ENCODE measurements at regions of chr19 and their contacts with region 1.

Region 1: DNA sequence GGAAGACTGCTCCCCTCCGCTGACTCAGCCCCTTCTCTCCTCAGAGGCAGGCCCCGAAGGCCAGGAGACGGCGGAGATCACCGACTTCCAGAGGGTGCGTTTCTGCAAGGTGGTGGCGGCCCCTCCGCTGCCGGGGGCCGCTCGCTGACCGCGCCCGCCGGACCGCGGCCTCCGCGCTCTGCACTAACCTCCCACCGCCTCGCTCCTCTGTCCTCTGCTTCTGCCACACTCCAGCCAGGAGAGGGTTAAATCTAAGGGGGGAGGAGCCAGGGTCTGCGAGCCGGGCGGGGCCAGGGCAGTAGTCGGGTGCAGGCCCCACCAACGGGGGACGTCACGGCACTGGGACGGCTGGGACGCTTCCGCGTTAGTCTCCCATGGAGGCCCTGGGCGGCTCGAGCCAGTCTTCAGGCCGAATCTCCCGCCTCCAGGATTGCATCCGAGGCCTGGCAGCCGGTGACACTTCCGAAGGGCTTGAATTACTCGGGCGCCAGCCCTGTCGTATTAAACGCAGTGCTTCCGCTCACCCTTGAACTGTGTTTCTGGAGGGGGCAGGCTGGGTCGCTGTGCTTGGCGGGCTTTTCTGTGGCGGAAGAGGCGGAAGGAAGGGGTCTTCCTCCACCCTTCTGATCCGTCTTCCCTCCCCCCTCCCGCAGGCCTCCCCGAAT is 1.2 kb upstream of the INAFM1 start:
- DNase-seq: peak; percentile 77 to 93 (median 89)
- ATAC-seq: peak; percentile 56
- H3K4me3 ChIP-seq: peak overlapping the region; percentile 94 to 99
- H3K4me3 Mint-ChIP-seq: peak overlapping the region; percentile 98
- H3K27ac ChIP-seq: peak overlapping the region; percentile 96 to 97
- H3K27ac Mint-ChIP-seq: peak overlapping the region; percentile 97
- H3K4me1 ChIP-seq: peaks cover 18% of the 10 kb centered on the region
- H3K4me1 Mint-ChIP-seq: peaks cover 19% of the 10 kb centered on the region
- H3K27me3 ChIP-seq: no peaks in the 10 kb centered on the region
- H3K27me3 Mint-ChIP-seq: no peaks in the 10 kb centered on the region
- CTCF ChIP-seq: no peak

Region 2: GRCh38 chr19:45506246-45506990 is 1767.0 kb before region 1 on chr19:
- CTCF ChIA-PET with region 1: no interaction called
- POLR2A ChIA-PET with region 1: no interaction called
- intact Hi-C with region 1: loop called in 1 of 2 experiments (anchors 5 kb)
- DNase-seq: peak; percentile 93 to 99 (median 97)
- ATAC-seq: peak; percentile 79
- H3K4me3 ChIP-seq: peak overlapping the region; percentile 74 to 90
- H3K4me3 Mint-ChIP-seq: peak overlapping the region; percentile 88
- H3K27ac ChIP-seq: peak overlapping the region; percentile 85 to 91
- H3K27ac Mint-ChIP-seq: peak overlapping the region; percentile 93
- H3K4me1 ChIP-seq: peaks cover 33% of the 10 kb centered on the region
- H3K4me1 Mint-ChIP-seq: peaks cover 39% of the 10 kb centered on the region
- H3K27me3 ChIP-seq: no peaks in the 10 kb centered on the region
- H3K27me3 Mint-ChIP-seq: no peaks in the 10 kb centered on the region
- CTCF ChIP-seq: peak; percentile 32

Region 3: DNA sequence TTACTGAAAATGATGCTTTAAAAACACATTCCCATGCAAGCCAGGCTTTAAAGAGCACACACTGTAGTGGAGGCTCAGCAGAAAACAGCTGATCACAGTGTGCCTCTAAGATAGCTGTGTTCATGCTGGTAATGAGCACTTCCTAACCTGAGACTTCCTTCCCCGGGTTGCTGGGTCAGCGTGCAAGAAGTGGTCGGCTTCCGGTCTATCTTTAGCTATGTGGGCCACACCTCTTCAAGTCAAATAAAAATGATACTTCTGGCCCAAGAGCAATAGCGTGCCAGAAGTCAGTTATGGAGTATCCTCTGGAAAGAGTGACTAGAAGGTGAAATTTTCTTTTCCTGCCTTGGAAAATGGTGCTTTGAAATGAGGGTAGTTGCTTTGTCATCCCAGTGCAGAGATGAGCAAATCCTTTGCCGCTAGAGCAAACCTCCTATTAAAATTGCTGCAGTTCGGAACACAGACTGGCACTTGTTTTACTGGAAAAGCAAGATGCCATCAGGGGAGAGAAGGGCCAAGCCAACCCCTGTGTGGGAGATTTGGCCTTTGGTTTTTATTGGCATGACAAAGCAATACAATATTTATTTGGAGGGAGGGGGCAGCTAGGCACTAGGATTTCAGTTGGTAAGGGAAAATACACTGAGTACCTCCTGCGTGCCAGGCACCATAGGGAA is 348.4 kb before region 1 on chr19:
- CTCF ChIA-PET with region 1: no interaction called
- POLR2A ChIA-PET with region 1: no interaction called
- intact Hi-C with region 1: no loop called
- DNase-seq: peak in 6 of 9 experiments; percentile 11 to 58 (median 18)
- ATAC-seq: peak; percentile 49
- H3K4me3 ChIP-seq: no peak overlapping the region
- H3K4me3 Mint-ChIP-seq: peak overlapping the region; percentile 58
- H3K27ac ChIP-seq: peak overlapping the region in 1 of 2 experiments; percentile 34
- H3K27ac Mint-ChIP-seq: peak overlapping the region; percentile 70
- H3K4me1 ChIP-seq: peaks cover 17% of the 10 kb centered on the region
- H3K4me1 Mint-ChIP-seq: peaks cover 54% of the 10 kb centered on the region
- H3K27me3 ChIP-seq: no peaks in the 10 kb centered on the region
- H3K27me3 Mint-ChIP-seq: no peaks in the 10 kb centered on the region
- CTCF ChIP-seq: no peak

Region 4: DNA sequence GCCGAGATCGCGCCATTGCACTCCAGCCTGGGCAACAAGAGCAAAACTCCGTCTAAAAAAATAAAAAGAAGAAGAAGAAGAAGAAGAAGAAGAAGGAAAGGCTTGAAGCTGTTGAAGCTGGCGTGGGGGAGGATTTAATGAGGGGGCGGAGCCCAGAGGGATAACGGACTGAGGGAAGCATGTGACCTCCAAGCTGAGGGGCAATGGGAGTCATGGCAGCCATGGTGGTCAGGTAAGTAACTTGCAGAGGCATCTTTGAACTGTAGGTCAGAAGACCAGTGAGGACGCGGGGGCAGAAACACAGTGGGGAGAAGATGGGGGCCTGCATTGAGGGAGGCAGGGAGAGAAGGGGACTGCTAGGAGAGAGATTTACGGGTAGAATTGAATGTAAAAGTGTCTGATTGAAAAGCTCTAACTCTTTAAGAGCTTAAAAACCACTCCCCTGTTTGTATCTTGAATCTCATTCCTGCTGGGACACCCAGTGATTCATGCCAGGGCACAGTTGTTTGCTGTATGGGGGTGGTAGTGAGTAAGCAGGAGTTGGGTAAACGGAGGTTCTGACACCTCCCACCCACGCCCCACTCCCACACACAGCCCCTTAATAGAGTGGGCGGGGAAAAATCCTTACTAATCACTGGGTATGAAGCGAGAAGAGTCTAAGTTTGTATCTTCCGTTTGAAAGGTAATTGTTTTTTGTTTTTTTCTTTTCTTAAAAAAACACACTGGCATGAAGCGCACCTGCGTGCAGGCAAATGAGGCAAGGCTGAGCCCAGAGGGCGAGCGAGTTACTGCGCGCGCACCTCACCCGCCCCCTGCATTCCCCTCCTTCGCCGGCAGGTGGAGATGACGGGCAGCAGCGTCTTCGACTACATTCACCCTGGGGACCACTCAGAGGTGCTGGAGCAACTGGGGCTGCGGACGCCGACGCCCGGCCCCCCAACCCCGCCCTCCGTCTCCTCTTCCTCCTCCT is 238.0 kb before region 1 on chr19:
- CTCF ChIA-PET with region 1: no interaction called
- POLR2A ChIA-PET with region 1: no interaction called
- intact Hi-C with region 1: loop called in 1 of 2 experiments (anchors 5 kb)
- DNase-seq: peak; percentile 90 to 99 (median 96)
- ATAC-seq: peak; percentile 98
- H3K4me3 ChIP-seq: peak overlapping the region; percentile 52 to 58
- H3K4me3 Mint-ChIP-seq: peak overlapping the region; percentile 88
- H3K27ac ChIP-seq: peak overlapping the region in 1 of 2 experiments; percentile 30
- H3K27ac Mint-ChIP-seq: peak overlapping the region; percentile 85
- H3K4me1 ChIP-seq: peaks cover 16% of the 10 kb centered on the region
- H3K4me1 Mint-ChIP-seq: peaks cover 17% of the 10 kb centered on the region
- H3K27me3 ChIP-seq: peaks cover 4 to 6% of the 10 kb centered on the region in 2 experiments
- H3K27me3 Mint-ChIP-seq: peaks cover 8% of the 10 kb centered on the region
- CTCF ChIP-seq: peak; percentile 99

Region 5: GRCh38 chr19:47210689-47211316 is 62.6 kb before region 1 on chr19:
- CTCF ChIA-PET with region 1: interaction called, 11 read pairs
- POLR2A ChIA-PET with region 1: interaction called, 3 read pairs
- intact Hi-C with region 1: no loop called
- DNase-seq: peak; percentile 58 to 87 (median 83)
- ATAC-seq: peak; percentile 98
- H3K4me3 ChIP-seq: no peak overlapping the region
- H3K4me3 Mint-ChIP-seq: no peak overlapping the region
- H3K27ac ChIP-seq: peak overlapping the region in 1 of 2 experiments; percentile 39
- H3K27ac Mint-ChIP-seq: peak overlapping the region; percentile 80
- H3K4me1 ChIP-seq: peaks cover 8% of the 10 kb centered on the region
- H3K4me1 Mint-ChIP-seq: peaks cover 8% of the 10 kb centered on the region
- H3K27me3 ChIP-seq: no peaks in the 10 kb centered on the region
- H3K27me3 Mint-ChIP-seq: no peaks in the 10 kb centered on the region
- CTCF ChIP-seq: peak; percentile 89

Region 6: GRCh38 chr19:47236072-47236675 is 37.3 kb before region 1 on chr19:
- CTCF ChIA-PET with region 1: no interaction called
- POLR2A ChIA-PET with region 1: no interaction called
- intact Hi-C with region 1: no loop called
- DNase-seq: no peak
- ATAC-seq: no peak
- H3K4me3 ChIP-seq: no peak overlapping the region
- H3K4me3 Mint-ChIP-seq: no peak overlapping the region
- H3K27ac ChIP-seq: no peak overlapping the region
- H3K27ac Mint-ChIP-seq: no peak overlapping the region
- H3K4me1 ChIP-seq: peaks cover 30% of the 10 kb centered on the region
- H3K4me1 Mint-ChIP-seq: peaks cover 34% of the 10 kb centered on the region
- H3K27me3 ChIP-seq: no peaks in the 10 kb centered on the region
- H3K27me3 Mint-ChIP-seq: no peaks in the 10 kb centered on the region
- CTCF ChIP-seq: no peak

Region 7: DNA sequence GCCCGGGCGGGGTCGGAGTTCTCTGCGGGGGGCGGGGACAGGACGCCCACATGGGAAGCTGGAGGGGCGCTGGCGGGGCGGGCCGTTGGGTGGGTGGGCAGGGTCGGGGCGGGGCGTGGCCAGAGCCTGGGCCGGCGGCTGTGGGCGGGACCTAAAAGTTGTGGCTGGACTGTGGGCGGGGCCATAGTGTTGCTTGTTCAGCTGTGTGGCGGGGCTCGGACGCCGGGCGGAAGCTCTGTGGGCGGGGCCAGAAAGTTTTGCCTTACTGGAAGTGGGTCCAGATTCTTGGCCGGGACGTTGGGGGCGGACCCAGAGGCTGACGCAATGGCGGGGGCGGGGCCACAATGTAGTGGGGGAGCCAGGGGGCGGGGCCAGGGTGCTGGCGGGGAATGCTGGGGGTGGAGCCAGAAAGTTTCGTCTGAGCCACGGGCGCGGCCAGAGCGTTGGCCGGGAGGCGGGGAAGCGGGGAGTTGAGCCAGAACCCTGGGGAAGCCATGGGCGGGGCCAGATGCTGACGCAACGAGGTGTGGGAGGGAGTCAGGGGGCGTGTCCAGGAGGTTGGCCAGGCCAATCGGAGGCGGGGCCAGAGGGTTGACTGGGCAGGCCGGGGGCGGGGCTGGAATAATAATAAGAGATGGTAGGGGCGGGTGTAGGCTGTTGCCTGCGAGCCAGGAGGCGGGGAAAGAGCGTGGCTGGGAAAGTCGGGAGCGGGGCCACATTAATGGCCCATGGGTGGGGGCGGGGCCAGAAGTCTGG is 16.6 kb before region 1 on chr19:
- CTCF ChIA-PET with region 1: interaction called, 4 read pairs
- POLR2A ChIA-PET with region 1: interaction called, 43 read pairs
- intact Hi-C with region 1: loop called (anchors 1 kb)
- DNase-seq: peak; percentile 96 to 100 (median 98)
- ATAC-seq: peak; percentile 80
- H3K4me3 ChIP-seq: peak overlapping the region; percentile 65 to 70
- H3K4me3 Mint-ChIP-seq: peak overlapping the region; percentile 92
- H3K27ac ChIP-seq: peak overlapping the region; percentile 76 to 98
- H3K27ac Mint-ChIP-seq: peak overlapping the region; percentile 97
- H3K4me1 ChIP-seq: peaks cover 23% of the 10 kb centered on the region
- H3K4me1 Mint-ChIP-seq: peaks cover 35% of the 10 kb centered on the region
- H3K27me3 ChIP-seq: no peaks in the 10 kb centered on the region
- H3K27me3 Mint-ChIP-seq: no peaks in the 10 kb centered on the region
- CTCF ChIP-seq: no peak

Region 8: DNA sequence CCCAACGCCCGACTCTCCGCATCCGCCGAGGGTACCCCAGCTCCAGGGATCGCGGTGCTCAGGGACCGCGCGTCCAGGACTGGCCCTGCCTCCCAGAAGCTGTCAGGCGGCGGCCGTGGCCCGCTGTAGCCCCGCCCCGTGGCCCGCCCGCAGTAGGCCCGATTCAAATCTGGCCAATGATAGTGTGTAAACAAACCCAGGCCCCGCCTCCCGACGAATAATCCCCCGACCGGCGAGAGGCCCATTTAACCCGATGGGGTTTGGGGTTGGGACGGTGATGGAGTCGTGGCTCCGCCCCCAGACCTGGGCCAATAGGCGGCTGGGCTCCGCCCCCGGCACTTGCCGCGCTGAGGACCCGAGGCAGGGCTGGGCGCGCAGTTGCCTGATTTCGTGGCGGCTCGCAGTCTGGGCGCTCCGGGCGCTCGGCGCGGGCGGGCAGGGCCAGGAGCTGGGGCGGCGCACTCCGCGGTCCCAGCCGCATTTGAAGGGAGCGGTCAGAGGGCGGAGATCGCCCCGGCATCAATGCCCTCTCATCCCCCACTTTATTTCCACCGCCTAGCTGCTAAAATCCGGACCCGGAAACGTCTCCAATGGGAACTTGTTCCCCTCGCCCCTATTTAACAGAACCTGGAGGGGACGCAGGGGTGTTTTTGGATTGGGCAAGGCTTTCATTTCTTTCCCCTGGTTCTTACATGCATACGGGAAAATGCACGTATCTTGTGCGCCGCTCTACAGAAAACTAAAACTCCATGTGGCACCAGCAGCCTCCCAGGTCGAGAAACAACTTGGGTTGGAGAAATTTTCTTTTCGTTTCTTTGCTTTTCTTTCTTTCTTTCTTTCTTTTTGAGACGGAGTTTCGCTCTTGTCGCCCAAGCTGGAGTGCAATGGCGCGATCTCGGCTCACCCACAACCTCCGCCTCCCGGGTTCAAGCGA is 327.1 kb after region 1 on chr19:
- CTCF ChIA-PET with region 1: no interaction called
- POLR2A ChIA-PET with region 1: no interaction called
- intact Hi-C with region 1: loop called (anchors 2 kb)
- DNase-seq: peak; percentile 99 to 100 (median 100)
- ATAC-seq: peak; percentile 97
- H3K4me3 ChIP-seq: peak overlapping the region; percentile 77 to 93
- H3K4me3 Mint-ChIP-seq: peak overlapping the region; percentile 82
- H3K27ac ChIP-seq: peak overlapping the region; percentile 80 to 83
- H3K27ac Mint-ChIP-seq: peak overlapping the region; percentile 81
- H3K4me1 ChIP-seq: peaks cover 10% of the 10 kb centered on the region
- H3K4me1 Mint-ChIP-seq: peaks cover 26% of the 10 kb centered on the region
- H3K27me3 ChIP-seq: no peaks in the 10 kb centered on the region
- H3K27me3 Mint-ChIP-seq: no peaks in the 10 kb centered on the region
- CTCF ChIP-seq: no peak